Mammary epithelial cell (primary cell): ENCODE measurements at regions of chr2 and their contacts with region 1.

Region 1: GRCh38 chr2:150517951-150518680 is 30.6 kb upstream of the RND3 start:
- DNase-seq: peak; percentile 41
- H3K4me3 ChIP-seq: no peak overlapping the region
- H3K27ac ChIP-seq: no peak overlapping the region
- H3K4me1 ChIP-seq: peaks cover 23% of the 10 kb centered on the region
- H3K27me3 ChIP-seq: no peaks in the 10 kb centered on the region
- CTCF ChIP-seq: no peak

Region 2: DNA sequence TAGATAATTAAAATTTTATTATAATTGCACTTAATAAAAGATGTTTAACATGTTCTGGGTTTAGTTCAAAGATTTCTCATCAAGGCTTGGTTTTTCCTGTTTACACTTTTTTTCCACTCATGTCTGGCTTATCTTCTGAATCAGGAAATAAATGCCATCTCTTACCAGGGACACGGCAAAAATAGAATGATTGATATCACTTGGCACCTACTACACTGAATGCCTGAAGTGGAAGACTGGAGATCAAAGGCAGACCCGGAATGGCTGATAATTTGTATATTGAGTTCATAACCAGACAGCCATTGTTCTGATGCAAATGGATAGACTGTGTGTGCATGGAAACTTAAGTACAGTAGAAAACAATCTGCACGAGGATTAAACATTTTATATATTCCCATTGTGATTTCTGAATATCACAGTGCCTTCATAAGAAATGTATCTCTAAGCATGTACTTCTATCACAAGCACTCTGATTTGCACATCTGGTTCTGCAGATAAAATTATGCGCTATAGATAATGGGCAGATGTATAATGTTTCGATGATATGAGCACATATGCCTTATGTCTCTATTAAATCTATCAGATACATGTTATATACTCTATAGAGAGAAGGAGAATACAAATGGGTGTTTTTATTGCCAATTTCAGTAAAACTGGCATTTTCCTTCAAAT is 335.4 kb before region 1 on chr2:
- CTCF ChIA-PET with region 1: no interaction called
- dilution Hi-C with region 1: no loop called
- in situ Hi-C with region 1: no loop called
- intact Hi-C with region 1: no loop called
- DNase-seq: no peak
- H3K4me3 ChIP-seq: no peak overlapping the region
- H3K27ac ChIP-seq: no peak overlapping the region
- H3K4me1 ChIP-seq: no peaks in the 10 kb centered on the region
- H3K27me3 ChIP-seq: no peaks in the 10 kb centered on the region
- CTCF ChIP-seq: no peak

Region 3: DNA sequence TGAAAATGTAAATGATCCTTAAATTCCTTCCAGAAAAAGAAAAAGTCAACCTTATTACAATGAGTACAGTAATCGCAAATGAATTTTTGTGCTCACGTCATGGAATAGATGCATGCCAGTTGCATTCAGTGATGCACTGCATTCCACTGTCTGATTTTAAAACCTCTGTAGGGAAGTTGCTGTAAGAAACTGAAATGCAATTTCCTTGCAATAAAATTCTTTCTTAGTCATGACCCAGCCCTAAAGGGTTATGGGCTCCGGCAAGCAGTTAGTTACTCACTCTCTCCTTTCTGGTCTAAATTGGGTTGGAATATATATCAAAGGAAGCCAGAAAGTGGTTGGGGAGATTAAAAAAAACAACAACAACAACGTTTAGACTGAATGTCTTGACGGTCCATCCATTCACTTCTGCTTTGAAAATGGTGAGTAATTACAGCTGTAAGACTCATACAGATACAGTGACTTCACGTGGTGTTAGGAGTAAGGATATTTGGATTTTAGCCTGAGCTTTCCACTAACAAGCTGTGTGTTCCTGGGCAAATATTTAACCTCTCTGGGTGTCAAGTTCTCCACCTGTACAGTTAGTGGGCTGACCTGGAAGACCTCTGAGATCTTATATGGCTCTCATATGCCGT is 22.0 kb before region 1 on chr2:
- CTCF ChIA-PET with region 1: no interaction called
- dilution Hi-C with region 1: no loop called
- in situ Hi-C with region 1: no loop called
- intact Hi-C with region 1: loop called (anchors 1 kb)
- DNase-seq: peak; percentile 92
- H3K4me3 ChIP-seq: peak overlapping the region in 1 of 3 experiments; percentile 21
- H3K27ac ChIP-seq: peak overlapping the region; percentile 85
- H3K4me1 ChIP-seq: peaks cover 13% of the 10 kb centered on the region
- H3K27me3 ChIP-seq: no peaks in the 10 kb centered on the region
- CTCF ChIP-seq: no peak

Region 4: DNA sequence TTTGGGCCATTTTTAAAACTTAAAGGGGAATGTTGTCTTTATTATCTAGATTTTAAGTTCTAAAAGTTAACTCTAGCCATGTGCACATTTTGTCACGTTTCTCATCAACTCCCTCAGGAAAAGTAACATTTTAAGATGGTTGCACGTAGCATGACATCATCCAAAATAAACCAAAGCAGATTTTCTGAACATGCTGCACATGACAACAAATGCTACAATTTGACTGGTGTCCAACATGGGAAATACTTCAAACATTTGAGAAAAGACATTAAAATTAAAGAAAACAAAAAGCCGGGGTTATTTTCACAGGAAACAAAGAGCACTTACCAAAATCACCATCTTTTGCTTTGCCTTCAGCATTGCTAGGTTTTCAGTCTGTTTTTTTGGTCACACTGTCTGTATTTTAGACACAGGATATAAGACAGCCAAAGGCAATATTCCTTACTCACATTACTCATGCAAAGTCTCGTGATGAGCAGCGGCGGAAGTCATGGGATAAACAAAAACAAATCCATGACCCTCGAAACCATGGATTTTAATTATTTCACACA is 20.6 kb after region 1 on chr2:
- CTCF ChIA-PET with region 1: no interaction called
- dilution Hi-C with region 1: no loop called
- in situ Hi-C with region 1: no loop called
- intact Hi-C with region 1: no loop called
- DNase-seq: no peak
- H3K4me3 ChIP-seq: no peak overlapping the region
- H3K27ac ChIP-seq: no peak overlapping the region
- H3K4me1 ChIP-seq: peaks cover 8% of the 10 kb centered on the region
- H3K27me3 ChIP-seq: no peaks in the 10 kb centered on the region
- CTCF ChIP-seq: no peak